Vagina (tissue), 2 donors: ENCODE measurements at regions of chr1 and their contacts with region 1.

Region 1: DNA sequence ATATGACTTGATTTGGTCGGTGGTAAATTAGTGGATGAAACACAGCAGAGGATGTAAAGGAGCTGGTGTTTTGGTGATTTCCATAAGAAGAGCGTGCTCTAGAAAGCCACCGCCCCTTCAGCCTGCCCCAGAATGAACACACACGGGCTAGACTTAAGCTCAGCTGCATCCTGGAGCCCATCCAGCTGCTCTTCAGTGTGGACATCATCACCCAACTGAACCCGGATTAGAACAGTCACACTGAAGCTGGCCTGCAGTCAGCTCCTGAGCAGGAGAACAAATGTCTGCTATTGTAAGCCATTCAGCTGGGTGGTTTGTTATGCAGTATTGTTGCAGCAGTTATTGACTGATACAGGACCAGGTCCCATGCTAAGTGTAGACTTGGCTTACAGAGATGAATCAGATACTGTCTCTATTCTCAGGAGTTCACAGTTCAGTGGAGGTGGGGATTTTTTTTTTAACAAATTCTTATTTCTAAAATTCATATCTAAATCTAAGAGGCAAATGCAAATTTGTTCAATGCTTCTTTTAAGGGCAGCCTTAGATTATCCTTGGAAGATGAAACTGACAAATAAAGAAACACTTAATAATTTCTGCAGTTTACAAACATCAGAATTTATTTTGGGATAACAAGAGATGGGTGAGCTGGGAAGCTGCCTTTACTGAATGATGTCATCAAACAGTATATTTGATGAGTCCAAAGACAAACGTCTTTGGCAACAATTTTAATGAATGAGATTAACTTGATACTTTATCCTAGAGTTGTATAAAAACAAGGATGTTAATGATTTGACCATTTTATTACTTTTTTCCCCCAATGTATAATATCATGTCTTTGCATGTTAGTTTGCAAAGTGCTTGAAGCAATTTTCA is 251.2 kb downstream of the TRABD2B start:
- DNase-seq: no peak
- H3K4me3 ChIP-seq: no peak overlapping the region
- H3K27ac ChIP-seq: no peak overlapping the region
- H3K4me1 ChIP-seq: no peaks in the 10 kb centered on the region
- H3K27me3 ChIP-seq: no peaks in the 10 kb centered on the region
- CTCF ChIP-seq: no peak
- POLR2A ChIP-seq: no peak

Region 2: GRCh38 chr1:48202030-48202752 is 456.2 kb after region 1 on chr1:
- intact Hi-C with region 1: loop called (anchors 10 kb)
- DNase-seq: no peak
- H3K4me3 ChIP-seq: no peak overlapping the region
- H3K27ac ChIP-seq: no peak overlapping the region
- H3K4me1 ChIP-seq: peaks cover 4% of the 10 kb centered on the region
- H3K27me3 ChIP-seq: no peaks in the 10 kb centered on the region
- CTCF ChIP-seq: peak; percentile 75 to 88 (median 83)
- POLR2A ChIP-seq: no peak